MCF 10A (cell line): ENCODE measurements at regions of chr1 and their contacts with region 1.

Region 1: DNA sequence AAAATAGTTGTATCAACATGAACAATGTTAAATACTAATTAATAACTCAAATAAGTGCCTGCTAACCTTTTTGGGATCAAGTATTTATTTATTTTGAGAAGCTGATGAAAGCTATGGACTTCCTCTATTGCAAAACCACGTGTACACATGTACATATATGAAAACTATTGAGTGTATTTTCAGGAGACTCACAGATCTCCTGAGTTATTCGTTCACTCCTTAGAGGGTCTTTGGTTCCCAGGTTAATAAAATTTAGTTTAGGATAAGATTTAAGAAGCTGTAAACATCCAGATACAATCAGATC is 130.5 kb downstream of the DISC1 start:
- DNase-seq: no peak
- H3K4me3 Mint-ChIP-seq: no peak overlapping the region
- H3K27ac Mint-ChIP-seq: peak overlapping the region; percentile 57
- H3K4me1 Mint-ChIP-seq: no peaks in the 10 kb centered on the region
- H3K27me3 Mint-ChIP-seq: no peaks in the 10 kb centered on the region
- CTCF ChIP-seq: no peak

Region 2: DNA sequence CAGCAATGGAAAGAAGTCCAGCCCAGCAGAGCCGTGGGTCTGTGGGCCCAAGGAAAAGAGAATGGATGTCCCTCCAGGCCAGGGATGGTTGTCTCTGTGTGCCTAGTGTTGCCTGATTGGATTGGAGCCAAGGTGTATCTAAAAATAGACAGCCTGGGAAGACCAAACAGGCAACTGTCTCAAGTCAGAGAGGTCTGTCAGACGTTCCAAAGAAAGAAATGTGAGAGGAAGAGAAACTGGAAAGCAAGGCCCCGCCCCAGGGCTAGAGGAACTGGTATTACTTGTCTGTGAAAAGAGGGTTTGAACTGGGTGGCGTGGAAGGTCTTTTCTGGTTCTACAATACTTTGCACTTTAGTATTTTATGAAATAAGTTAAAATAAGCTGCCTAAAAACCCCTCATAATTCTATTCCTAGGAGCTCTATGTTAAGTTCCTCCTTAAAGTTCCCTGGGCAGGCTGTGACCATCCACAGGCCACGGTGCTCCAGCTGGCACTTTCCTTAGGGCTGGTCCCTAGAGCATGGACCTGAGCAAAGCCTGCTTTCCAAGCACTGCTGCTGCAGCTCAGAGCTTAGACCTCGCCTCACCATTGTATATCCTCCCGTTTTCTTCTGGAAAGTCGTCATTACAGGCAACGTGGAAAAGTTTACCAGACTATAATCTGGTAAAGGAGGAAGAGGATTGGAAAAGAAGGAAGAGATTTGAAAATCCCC is 21.1 kb after region 1 on chr1:
- CTCF ChIA-PET with region 1: interaction called, 57 read pairs
- POLR2A ChIA-PET with region 1: interaction called, 6 read pairs
- intact Hi-C with region 1: no loop called
- DNase-seq: peak; percentile 60
- H3K4me3 Mint-ChIP-seq: no peak overlapping the region
- H3K27ac Mint-ChIP-seq: no peak overlapping the region
- H3K4me1 Mint-ChIP-seq: peaks cover 8% of the 10 kb centered on the region
- H3K27me3 Mint-ChIP-seq: no peaks in the 10 kb centered on the region
- CTCF ChIP-seq: no peak

Region 3: GRCh38 chr1:231806623-231807495 is 49.8 kb after region 1 on chr1:
- CTCF ChIA-PET with region 1: interaction called, 31 read pairs
- POLR2A ChIA-PET with region 1: no interaction called
- intact Hi-C with region 1: loop called (anchors 1 kb)
- DNase-seq: peak; percentile 92
- H3K4me3 Mint-ChIP-seq: no peak overlapping the region
- H3K27ac Mint-ChIP-seq: peak overlapping the region; percentile 65
- H3K4me1 Mint-ChIP-seq: peaks cover 31% of the 10 kb centered on the region
- H3K27me3 Mint-ChIP-seq: no peaks in the 10 kb centered on the region
- CTCF ChIP-seq: peak; percentile 64

Region 4: GRCh38 chr1:232038706-232039677 is 281.9 kb after region 1 on chr1:
- CTCF ChIA-PET with region 1: no interaction called
- POLR2A ChIA-PET with region 1: no interaction called
- intact Hi-C with region 1: loop called (anchors 10 kb)
- DNase-seq: peak; percentile 78
- H3K4me3 Mint-ChIP-seq: no peak overlapping the region
- H3K27ac Mint-ChIP-seq: peak overlapping the region; percentile 22
- H3K4me1 Mint-ChIP-seq: peaks cover 15% of the 10 kb centered on the region
- H3K27me3 Mint-ChIP-seq: no peaks in the 10 kb centered on the region
- CTCF ChIP-seq: no peak

Region 5: GRCh38 chr1:232416026-232416568 is 659.0 kb after region 1 on chr1:
- CTCF ChIA-PET with region 1: interaction called, 5 read pairs
- POLR2A ChIA-PET with region 1: no interaction called
- intact Hi-C with region 1: loop called (anchors 5 kb)
- DNase-seq: peak; percentile 40
- H3K4me3 Mint-ChIP-seq: no peak overlapping the region
- H3K27ac Mint-ChIP-seq: peak overlapping the region; percentile 57
- H3K4me1 Mint-ChIP-seq: peaks cover 21% of the 10 kb centered on the region
- H3K27me3 Mint-ChIP-seq: no peaks in the 10 kb centered on the region
- CTCF ChIP-seq: no peak